Heart left ventricle (tissue), 16 donors: ENCODE measurements at regions of chr14 and their contacts with region 1.

Region 1: DNA sequence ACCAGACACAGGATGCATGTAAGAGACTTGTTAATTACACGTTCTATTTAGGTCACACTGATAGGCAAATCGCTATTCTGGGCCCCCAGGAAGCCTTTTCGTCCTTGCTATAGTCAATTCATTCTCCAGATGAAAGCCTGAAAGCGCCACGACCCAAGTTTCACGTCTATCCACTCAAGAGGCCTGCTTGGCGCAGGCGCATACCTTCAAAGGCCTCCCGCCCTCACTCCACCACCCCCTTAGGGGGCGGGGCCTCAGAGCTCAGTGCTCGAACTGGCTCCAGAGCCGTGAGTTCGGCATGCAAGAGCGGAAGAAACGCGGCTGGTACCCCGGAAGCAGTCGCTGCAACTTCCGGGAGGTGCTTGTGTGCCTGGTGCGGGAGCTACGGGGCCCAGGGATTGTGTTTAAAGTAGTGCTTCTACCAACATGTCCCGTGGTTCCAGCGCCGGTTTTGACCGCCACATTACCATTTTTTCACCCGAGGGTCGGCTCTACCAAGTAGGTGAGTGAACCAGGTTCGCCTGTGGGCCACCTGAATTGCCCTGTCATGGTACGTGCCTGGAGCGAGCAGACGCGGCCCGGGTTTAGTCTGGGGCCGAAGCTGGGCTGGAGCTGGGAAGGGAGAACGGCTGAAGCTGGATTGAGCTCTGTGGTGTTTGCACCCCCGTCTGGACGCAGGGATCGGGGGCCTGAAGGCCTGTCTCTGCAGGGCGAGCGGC is at the start of gene PSMA6:
- DNase-seq: peak; percentile 99 to 100 (median 99)
- ATAC-seq: peak; percentile 99 to 100 (median 100)
- H3K4me3 ChIP-seq: peak within 1 kb of the TSS; percentile 69 to 97 (median 88)
- H3K27ac ChIP-seq: peak within 1 kb of the TSS; percentile 60 to 96 (median 90)
- H3K4me1 ChIP-seq: peaks cover 0 to 60% (median 39%) of the 10 kb centered on the region in 12 donors
- H3K27me3 ChIP-seq: no peaks in the 10 kb centered on the region
- CTCF ChIP-seq: peak in 1 of 12 donors; percentile 10
- POLR2A ChIP-seq: peak in 1 of 2 donors; percentile 79
- total RNA-seq, gene PSMA6: 146 to 230 (median 176) TPM

Region 2: GRCh38 chr14:35189422-35189821 is 102.8 kb before region 1 on chr14:
- intact Hi-C with region 1: no loop called
- DNase-seq: no peak
- ATAC-seq: no peak
- H3K4me3 ChIP-seq: no peak overlapping the region
- H3K27ac ChIP-seq: no peak overlapping the region
- H3K4me1 ChIP-seq: no peaks in the 10 kb centered on the region
- H3K27me3 ChIP-seq: no peaks in the 10 kb centered on the region
- CTCF ChIP-seq: no peak
- POLR2A ChIP-seq: no peak

Region 3: DNA sequence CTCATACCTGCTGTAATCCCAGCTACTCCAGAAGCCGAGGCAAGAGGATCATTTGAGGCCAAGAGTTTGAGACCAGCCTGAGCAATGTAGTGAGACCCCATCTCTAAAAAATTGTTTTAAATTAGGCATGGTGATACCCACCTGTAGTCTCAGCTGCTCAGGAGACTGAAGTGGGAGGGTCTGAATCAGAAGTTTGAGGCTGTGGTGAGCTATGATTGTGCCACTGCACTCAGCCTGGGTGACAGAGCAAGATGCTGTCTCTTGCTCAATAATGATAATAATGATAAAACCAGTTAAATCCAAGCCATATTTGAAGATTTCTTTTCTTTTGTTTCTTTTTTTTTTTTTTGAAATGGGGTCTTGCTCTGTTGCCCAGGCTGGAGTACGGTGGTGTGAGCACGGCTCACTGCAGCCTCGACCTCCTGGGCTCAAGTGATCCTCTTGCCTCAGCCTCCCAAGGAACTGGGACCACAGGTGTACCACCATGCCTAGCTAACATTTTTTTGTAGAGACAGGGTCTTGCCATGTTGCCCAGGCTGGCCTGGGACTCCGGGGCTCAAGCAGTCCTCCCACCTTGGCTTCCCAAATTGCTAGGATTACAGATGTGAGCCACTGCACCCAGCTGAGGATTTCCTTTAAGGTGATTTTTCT is 12.7 kb after region 1 on chr14:
- intact Hi-C with region 1: no loop called
- DNase-seq: no peak
- ATAC-seq: no peak
- H3K4me3 ChIP-seq: no peak overlapping the region
- H3K27ac ChIP-seq: peak overlapping the region in 1 of 12 donors; percentile 53
- H3K4me1 ChIP-seq: peaks cover 4 to 46% (median 20%) of the 10 kb centered on the region in 12 donors
- H3K27me3 ChIP-seq: no peaks in the 10 kb centered on the region
- CTCF ChIP-seq: no peak
- POLR2A ChIP-seq: no peak

Region 4: GRCh38 chr14:35341446-35342159 is 49.4 kb after region 1 on chr14:
- intact Hi-C with region 1: loop called in 6 of 10 experiments (anchors 2 to 5 kb)
- DNase-seq: peak; percentile 94 to 98 (median 96)
- ATAC-seq: peak; percentile 91 to 95 (median 92)
- H3K4me3 ChIP-seq: peak overlapping the region in 10 of 12 donors; percentile 14 to 51 (median 38)
- H3K27ac ChIP-seq: peak overlapping the region; percentile 85 to 99 (median 94)
- H3K4me1 ChIP-seq: peaks cover 16 to 74% (median 47%) of the 10 kb centered on the region in 12 donors
- H3K27me3 ChIP-seq: no peaks in the 10 kb centered on the region
- CTCF ChIP-seq: no peak
- POLR2A ChIP-seq: peak in 1 of 2 donors; percentile 74

Region 5: DNA sequence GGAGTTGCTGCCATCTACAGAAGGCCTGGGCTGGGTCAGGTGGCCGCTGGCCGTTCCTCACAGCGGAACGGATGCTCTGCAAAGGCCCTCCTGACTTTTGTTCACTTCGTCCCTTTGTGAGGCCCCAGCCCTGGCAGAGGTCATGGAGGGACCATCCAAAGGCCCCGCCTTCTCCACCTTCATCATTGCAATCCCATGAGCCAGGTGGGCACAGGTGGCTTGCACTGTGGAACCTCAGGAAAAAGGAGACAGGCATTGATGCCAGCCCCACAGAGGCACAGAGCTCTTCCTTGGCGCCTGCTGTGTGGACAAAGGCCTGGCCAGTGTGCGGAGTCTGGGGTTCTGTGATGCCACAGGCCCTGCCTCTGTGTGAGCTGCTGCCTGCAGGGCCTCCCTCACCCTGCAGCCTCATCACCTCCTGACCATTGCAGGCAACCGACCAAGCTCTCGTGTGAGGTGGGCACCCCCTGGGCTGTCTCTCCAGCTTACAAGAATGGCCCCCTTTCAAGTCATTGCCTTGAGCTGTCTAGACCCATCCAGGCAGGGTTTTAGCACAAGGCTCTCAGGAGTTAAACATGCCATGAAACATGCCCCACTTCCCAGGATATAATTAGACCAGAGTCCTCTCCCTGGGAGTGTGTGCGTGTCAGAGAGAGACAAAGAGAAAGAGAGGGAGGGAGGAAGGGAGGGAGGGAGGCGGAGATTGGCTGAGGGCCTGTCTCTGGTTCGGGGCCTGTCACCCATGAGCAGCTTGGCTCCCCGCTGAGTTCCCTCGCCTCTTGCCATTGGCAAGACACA is 93.0 kb after region 1 on chr14:
- intact Hi-C with region 1: loop called in 4 of 10 experiments (anchors 5 kb)
- DNase-seq: peak; percentile 85 to 91 (median 87)
- ATAC-seq: peak; percentile 95 to 96 (median 95)
- H3K4me3 ChIP-seq: no peak overlapping the region
- H3K27ac ChIP-seq: peak overlapping the region; percentile 61 to 95 (median 84)
- H3K4me1 ChIP-seq: peaks cover 9 to 37% (median 27%) of the 10 kb centered on the region in 12 donors
- H3K27me3 ChIP-seq: no peaks in the 10 kb centered on the region
- CTCF ChIP-seq: no peak
- POLR2A ChIP-seq: peak in 1 of 2 donors; percentile 39